Activated naive CD4-positive, alpha-beta T cell treated with anti-CD3 and anti-CD28 coated beads for 36 hours (primary cell): ENCODE measurements at regions of chr14 and their contacts with region 1.

Region 1: DNA sequence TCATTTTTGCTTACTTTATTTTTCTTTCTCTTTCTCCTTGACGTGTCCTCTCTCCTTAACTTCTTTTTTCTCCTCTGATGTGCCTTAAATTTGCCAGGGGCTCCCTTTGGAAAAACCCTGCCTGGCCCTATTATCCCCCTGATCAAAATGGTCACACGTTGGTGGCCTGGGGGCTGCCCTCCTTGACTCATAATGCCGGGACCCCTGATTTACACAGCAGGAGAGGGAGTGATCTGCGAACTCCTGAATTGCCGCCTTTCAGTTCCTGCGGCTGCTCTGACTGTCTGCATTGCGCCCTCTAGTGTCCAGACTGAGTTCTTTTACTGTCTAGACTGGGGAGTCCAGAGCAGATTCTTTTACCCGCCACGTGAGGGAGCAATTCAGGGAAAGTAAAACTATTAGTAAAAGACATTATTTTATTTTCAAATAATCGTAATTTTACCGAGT is 44.8 kb upstream of the GZMB start:
- DNase-seq: peak; percentile 89
- H3K4me3 Mint-ChIP-seq: peak overlapping the region; percentile 70
- H3K27ac Mint-ChIP-seq: peak overlapping the region; percentile 88
- H3K4me1 Mint-ChIP-seq: peaks cover 59% of the 10 kb centered on the region
- H3K27me3 Mint-ChIP-seq: no peaks in the 10 kb centered on the region

Region 2: DNA sequence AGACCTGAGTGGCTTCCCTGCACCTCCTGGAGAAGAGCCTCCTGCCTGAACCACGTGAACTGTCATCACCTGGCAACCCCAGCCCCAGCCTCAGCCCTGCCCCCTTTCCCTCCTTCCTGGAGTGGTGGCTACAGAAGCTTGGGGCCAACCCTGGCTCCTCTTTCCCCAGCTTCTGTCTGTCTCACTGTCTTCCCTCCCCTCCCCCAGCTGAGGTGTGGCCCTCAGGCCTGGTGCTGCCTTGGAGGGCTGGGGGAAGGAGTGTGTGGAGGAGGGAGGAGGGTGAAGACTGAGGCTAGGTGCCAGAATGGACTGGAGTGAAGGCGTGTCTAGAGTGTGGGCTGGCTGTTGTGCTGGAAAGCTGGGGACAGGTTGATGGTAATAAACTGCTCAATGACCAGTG is 301.2 kb before region 1 on chr14:
- CTCF ChIA-PET with region 1: no interaction called
- intact Hi-C with region 1: no loop called
- DNase-seq: no peak
- H3K4me3 Mint-ChIP-seq: no peak overlapping the region
- H3K27ac Mint-ChIP-seq: no peak overlapping the region
- H3K4me1 Mint-ChIP-seq: peaks cover 4% of the 10 kb centered on the region
- H3K27me3 Mint-ChIP-seq: peaks cover 3% of the 10 kb centered on the region

Region 3: GRCh38 chr14:24481622-24482324 is 197.1 kb before region 1 on chr14:
- CTCF ChIA-PET with region 1: interaction called, 20 read pairs
- intact Hi-C with region 1: loop called (anchors 1 kb)
- DNase-seq: peak; percentile 80
- H3K4me3 Mint-ChIP-seq: peak overlapping the region; percentile 68
- H3K27ac Mint-ChIP-seq: peak overlapping the region; percentile 22
- H3K4me1 Mint-ChIP-seq: peaks cover 23% of the 10 kb centered on the region
- H3K27me3 Mint-ChIP-seq: no peaks in the 10 kb centered on the region

Region 4: DNA sequence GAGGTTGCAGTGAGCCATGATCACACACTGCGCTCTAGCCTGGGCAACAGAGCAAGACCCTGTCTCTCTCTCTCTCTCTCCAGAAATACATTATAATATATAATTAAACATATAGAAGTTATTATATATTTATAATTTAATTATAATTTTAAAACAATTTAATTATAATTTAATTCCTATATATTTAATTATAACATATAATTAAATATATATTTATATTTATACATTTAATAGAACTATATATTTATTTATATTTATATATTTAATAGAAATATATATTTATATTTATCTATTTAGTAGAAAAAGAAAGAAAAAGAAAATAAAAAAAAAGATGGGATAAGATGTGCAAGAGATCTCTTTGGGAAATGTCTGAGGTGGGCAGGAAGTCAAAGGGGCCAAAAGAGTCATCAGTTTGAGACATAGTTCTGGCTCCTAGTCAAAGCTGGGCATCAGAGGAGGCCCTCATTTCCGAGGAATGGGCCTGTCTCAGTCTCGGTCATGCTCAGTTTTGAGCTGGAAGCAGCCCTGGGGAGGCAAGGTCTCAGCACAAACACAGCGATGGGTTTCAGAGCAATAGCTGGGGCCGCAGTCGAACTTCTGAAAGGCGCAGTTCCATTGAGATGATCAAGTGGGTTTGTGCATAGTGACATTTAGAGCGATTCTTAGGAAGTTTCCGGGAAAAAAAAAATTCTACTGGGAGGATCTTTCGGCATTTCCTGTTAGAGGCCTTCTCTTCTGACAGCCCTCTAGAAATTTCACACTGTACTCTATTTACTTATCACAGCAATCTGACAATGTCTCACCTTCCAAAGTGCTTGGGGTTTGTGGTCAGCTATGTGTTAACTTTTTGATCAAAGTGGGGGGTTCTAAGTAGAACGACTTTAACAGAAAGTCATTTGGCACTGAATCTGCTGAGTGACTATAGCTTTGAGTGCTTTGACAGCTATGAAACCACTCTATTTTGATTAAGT is 13.8 kb after region 1 on chr14:
- CTCF ChIA-PET with region 1: interaction called, 6 read pairs
- intact Hi-C with region 1: loop called (anchors 1 kb)
- DNase-seq: peak; percentile 55
- H3K4me3 Mint-ChIP-seq: no peak overlapping the region
- H3K27ac Mint-ChIP-seq: peak overlapping the region; percentile 73
- H3K4me1 Mint-ChIP-seq: peaks cover 13% of the 10 kb centered on the region
- H3K27me3 Mint-ChIP-seq: peaks cover 3% of the 10 kb centered on the region

Region 5: GRCh38 chr14:24848102-24848820 is 169.4 kb after region 1 on chr14:
- CTCF ChIA-PET with region 1: no interaction called
- intact Hi-C with region 1: no loop called
- DNase-seq: no peak
- H3K4me3 Mint-ChIP-seq: no peak overlapping the region
- H3K27ac Mint-ChIP-seq: no peak overlapping the region
- H3K4me1 Mint-ChIP-seq: no peaks in the 10 kb centered on the region
- H3K27me3 Mint-ChIP-seq: peaks cover 20% of the 10 kb centered on the region